OCI-LY7 (cell line): ENCODE measurements at regions of chr7 and their contacts with region 1.

Region 1: GRCh38 chr7:6589829-6590644 is at the start of gene INTS15:
- DNase-seq: peak; percentile 88
- H3K4me3 ChIP-seq: peak within 1 kb of the TSS; percentile 84
- H3K27ac ChIP-seq: peak within 1 kb of the TSS; percentile 72
- H3K4me1 ChIP-seq: peaks cover 22% of the 10 kb centered on the region
- CTCF ChIP-seq: no peak; the same call in 1 of the 2 replicates
- total RNA-seq, gene INTS15: 27.2 and 33.0 TPM in 2 replicates

Region 2: GRCh38 chr7:6577365-6578113 is 12.5 kb before region 1 on chr7 and contains the start of gene ZDHHC4:
- CTCF ChIA-PET with region 1: interaction called, 4 read pairs
- POLR2A ChIA-PET with region 1: interaction called, 7 read pairs
- intact Hi-C with region 1: loop called (anchors 1 kb)
- DNase-seq: peak; percentile 95
- H3K4me3 ChIP-seq: peak within 1 kb of the TSS; percentile 87
- H3K27ac ChIP-seq: peak within 1 kb of the TSS; percentile 79
- H3K4me1 ChIP-seq: peaks cover 73% of the 10 kb centered on the region
- CTCF ChIP-seq: no peak
- total RNA-seq, gene ZDHHC4: 60.7 and 76.4 TPM in 2 replicates

Region 3: GRCh38 chr7:6621195-6622091 is 31.4 kb after region 1 on chr7:
- CTCF ChIA-PET with region 1: no interaction called
- POLR2A ChIA-PET with region 1: interaction called, 3 read pairs
- intact Hi-C with region 1: loop called (anchors 2 kb)
- DNase-seq: peak; percentile 76
- H3K4me3 ChIP-seq: peak overlapping the region; percentile 50
- H3K27ac ChIP-seq: peak overlapping the region; percentile 20
- H3K4me1 ChIP-seq: peaks cover 41% of the 10 kb centered on the region
- CTCF ChIP-seq: no peak

Region 4: DNA sequence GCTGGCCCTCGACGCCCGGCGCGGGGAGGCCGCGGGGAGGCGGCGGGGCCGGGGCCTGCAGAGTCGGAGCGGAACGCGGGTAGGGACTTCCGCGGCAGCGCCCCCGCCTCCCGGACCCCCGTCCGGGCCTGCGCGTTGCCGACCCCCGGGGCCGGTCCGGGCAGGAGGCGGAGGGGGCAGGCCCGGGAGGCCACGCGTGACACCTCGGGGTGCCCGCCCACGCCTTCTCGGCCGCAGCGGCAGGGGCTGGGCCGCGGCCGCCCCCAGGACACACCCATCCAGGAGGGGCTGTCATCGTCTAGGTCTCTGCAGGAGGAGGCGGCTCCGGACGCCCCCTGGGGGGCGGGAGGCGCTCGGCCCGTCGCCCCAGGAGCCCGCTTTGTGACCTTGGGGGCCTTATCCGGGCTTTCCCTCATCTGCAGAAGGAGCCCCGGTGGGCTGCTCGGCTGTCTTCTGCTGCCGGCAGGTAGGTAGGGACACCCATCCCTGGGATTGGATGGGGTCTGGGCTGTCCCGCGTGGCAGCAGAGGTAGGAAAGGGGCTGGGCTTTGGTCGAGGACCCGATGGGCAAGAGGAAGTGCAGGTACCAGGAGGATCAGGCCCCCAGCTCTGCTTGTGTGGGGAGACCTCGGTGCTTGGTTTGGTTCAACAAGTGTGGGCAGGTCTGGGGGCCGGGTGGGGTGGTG is 47.6 kb after region 1 on chr7:
- CTCF ChIA-PET with region 1: no interaction called
- POLR2A ChIA-PET with region 1: no interaction called
- intact Hi-C with region 1: loop called (anchors 1 kb)
- DNase-seq: peak; percentile 86
- H3K4me3 ChIP-seq: peak overlapping the region; percentile 79
- H3K27ac ChIP-seq: peak overlapping the region; percentile 12
- H3K4me1 ChIP-seq: peaks cover 12% of the 10 kb centered on the region
- CTCF ChIP-seq: peak; percentile 74

Region 5: GRCh38 chr7:6729492-6730342 is 139.7 kb after region 1 on chr7:
- CTCF ChIA-PET with region 1: no interaction called
- POLR2A ChIA-PET with region 1: no interaction called
- intact Hi-C with region 1: loop called (anchors 5 kb)
- DNase-seq: peak; percentile 97
- H3K4me3 ChIP-seq: peak overlapping the region; percentile 95
- H3K27ac ChIP-seq: peak overlapping the region; percentile 46
- H3K4me1 ChIP-seq: peaks cover 25% of the 10 kb centered on the region
- CTCF ChIP-seq: no peak